SK-N-SH (cell line): ENCODE measurements at regions of chr17 and their contacts with region 1.

Region 1: GRCh38 chr17:77542551-77543490 is 402.1 kb downstream of the SEC14L1 start:
- DNase-seq: peak; percentile 94
- H3K4me3 ChIP-seq: peak overlapping the region in 1 of 2 experiments; percentile 8; a peak in 1 of 4 replicates
- H3K27ac ChIP-seq: 0 out of 4 replicates have a peak overlapping the region, but pooled peaks of 1 of the 2 experiments have one; percentile 18
- H3K4me1 ChIP-seq: peaks cover 4 to 23% of the 10 kb centered on the region in 2 experiments; a peak in 2 of 4 replicates
- H3K27me3 ChIP-seq: peaks cover 52% of the 10 kb centered on the region
- CTCF ChIP-seq: peak; percentile 99
- EP300 ChIP-seq: peak in 1 of 2 experiments; percentile 69; a peak in 1 of 4 replicates
- RAD21 ChIP-seq: peak; percentile 100

Region 2: DNA sequence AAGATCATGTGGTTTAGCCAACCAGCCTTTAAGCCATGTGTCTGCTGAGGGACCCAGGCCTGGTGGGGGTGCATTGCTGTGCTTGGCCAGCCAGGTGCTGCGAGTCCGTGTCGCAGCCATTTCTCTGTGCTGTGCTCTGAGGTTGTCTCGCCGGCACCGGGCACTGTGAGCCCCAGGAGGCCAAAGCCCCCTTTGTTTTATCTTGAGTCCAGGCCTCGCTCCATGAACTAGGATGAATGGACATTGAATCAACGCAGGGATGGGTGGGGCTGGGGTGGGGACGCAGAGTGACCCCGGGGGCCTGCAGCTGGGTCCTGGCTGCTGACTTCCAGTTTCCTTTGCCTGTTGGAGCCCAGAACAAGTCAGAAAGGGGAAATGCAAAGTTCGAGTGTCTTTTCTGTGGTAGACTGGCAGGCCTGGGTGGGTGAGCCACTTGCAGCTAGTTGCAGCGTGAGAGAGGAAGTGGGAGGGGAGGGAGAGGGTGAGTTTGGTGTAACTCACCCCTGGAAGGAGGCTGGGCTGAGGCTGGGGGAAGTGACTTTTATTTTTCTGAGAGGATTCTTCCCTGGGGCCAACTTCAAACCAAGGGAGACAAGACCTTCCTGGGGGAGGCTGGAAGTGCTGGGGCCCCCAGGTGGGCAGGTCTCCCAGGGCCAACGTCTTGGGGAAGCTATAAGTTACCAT is 77.3 kb before region 1 on chr17:
- CTCF ChIA-PET with region 1: no interaction called
- POLR2A ChIA-PET with region 1: no interaction called
- DNase-seq: no peak
- H3K4me3 ChIP-seq: no peak overlapping the region
- H3K27ac ChIP-seq: peak overlapping the region in 1 of 2 experiments; percentile 38; a peak in 2 of 4 replicates
- H3K4me1 ChIP-seq: peaks cover 20 to 23% of the 10 kb centered on the region in 2 experiments; a peak in 3 of 4 replicates
- H3K27me3 ChIP-seq: no peaks in the 10 kb centered on the region
- CTCF ChIP-seq: no peak
- EP300 ChIP-seq: no peak
- RAD21 ChIP-seq: no peak

Region 3: GRCh38 chr17:77482375-77483127 is 60.3 kb before region 1 on chr17:
- CTCF ChIA-PET with region 1: no interaction called
- POLR2A ChIA-PET with region 1: no interaction called
- DNase-seq: no peak
- H3K4me3 ChIP-seq: no peak overlapping the region
- H3K27ac ChIP-seq: no peak overlapping the region
- H3K4me1 ChIP-seq: peaks cover 11 to 37% of the 10 kb centered on the region in 2 experiments
- H3K27me3 ChIP-seq: no peaks in the 10 kb centered on the region
- CTCF ChIP-seq: no peak
- EP300 ChIP-seq: no peak
- RAD21 ChIP-seq: no peak

Region 4: DNA sequence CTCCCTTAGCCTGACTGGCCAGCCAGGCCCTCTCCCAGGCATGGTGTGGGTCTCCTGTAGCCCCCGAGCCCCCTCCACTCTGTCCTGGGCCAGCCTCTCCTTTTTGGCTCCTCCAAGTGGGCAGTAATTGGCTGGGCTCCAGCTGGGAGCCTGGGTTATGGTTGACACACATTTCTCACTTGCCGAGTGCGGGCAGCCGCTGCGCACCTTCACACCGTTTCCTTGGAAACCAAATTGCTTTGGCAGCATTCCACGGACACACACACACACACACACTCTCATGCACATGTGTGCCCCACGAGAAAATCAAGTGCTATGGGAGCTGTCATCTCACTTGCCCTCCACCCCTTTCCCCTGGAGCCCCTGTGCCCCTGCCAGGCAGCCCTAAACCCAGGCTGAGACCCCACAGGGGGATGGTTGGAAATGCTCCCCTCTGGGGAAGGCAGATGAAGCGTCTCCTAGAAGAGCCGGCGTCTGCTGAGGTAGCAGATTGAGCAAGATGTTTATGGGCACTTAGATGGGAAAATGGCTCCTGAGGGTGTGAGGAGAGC is 13.0 kb after region 1 on chr17:
- CTCF ChIA-PET with region 1: interaction called, 60 read pairs
- POLR2A ChIA-PET with region 1: interaction called, 4 read pairs
- DNase-seq: peak; percentile 92
- H3K4me3 ChIP-seq: no peak overlapping the region
- H3K27ac ChIP-seq: no peak overlapping the region
- H3K4me1 ChIP-seq: peaks cover 0 to 18% of the 10 kb centered on the region in 2 experiments; a peak in 1 of 4 replicates
- H3K27me3 ChIP-seq: peaks cover 50% of the 10 kb centered on the region
- CTCF ChIP-seq: no peak
- EP300 ChIP-seq: peak in 1 of 2 experiments; percentile 40; a peak in 1 of 4 replicates
- RAD21 ChIP-seq: peak; percentile 15

Region 5: DNA sequence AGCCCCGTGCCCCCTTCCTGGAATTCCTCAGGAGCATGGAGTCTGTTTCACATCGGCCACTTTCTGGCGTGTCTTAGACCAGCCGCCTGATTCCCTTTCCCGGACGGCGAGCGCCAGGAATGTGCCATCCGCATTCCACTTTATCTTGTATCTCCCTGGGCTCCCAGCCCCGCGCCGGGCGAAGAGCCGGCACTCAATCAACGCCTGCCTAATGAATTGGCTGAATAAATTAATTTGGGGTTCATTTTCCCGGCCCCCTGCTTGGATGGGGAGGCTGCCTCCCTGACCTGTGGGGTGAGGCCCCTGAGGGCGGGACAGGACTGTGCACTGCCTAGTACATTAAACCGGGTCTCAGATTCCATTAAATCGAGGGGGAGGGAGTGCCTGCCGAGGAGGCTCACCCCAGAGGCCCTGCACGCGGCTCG is 133.4 kb after region 1 on chr17:
- CTCF ChIA-PET with region 1: no interaction called
- POLR2A ChIA-PET with region 1: no interaction called
- DNase-seq: no peak
- H3K4me3 ChIP-seq: no peak overlapping the region
- H3K27ac ChIP-seq: no peak overlapping the region
- H3K4me1 ChIP-seq: peaks cover 0 to 6% of the 10 kb centered on the region in 2 experiments; a peak in 1 of 4 replicates
- H3K27me3 ChIP-seq: peaks cover 49% of the 10 kb centered on the region
- CTCF ChIP-seq: no peak
- EP300 ChIP-seq: no peak
- RAD21 ChIP-seq: no peak

Region 6: GRCh38 chr17:77690271-77691161 is 147.7 kb after region 1 on chr17:
- CTCF ChIA-PET with region 1: interaction called, 24 read pairs
- POLR2A ChIA-PET with region 1: interaction called, 3 read pairs
- DNase-seq: peak; percentile 88
- H3K4me3 ChIP-seq: peak overlapping the region in 1 of 2 experiments; percentile 12; a peak in 1 of 4 replicates
- H3K27ac ChIP-seq: peak overlapping the region in 1 of 2 experiments; percentile 93; a peak in 2 of 4 replicates
- H3K4me1 ChIP-seq: peaks cover 0 to 33% of the 10 kb centered on the region in 2 experiments; a peak in 1 of 4 replicates
- H3K27me3 ChIP-seq: peaks cover 48% of the 10 kb centered on the region; the same call in 1 of the 2 replicates
- CTCF ChIP-seq: no peak
- EP300 ChIP-seq: peak in 1 of 2 experiments; percentile 75; a peak in 2 of 4 replicates
- RAD21 ChIP-seq: peak; percentile 8; the same call in 1 of the 2 replicates

Region 7: DNA sequence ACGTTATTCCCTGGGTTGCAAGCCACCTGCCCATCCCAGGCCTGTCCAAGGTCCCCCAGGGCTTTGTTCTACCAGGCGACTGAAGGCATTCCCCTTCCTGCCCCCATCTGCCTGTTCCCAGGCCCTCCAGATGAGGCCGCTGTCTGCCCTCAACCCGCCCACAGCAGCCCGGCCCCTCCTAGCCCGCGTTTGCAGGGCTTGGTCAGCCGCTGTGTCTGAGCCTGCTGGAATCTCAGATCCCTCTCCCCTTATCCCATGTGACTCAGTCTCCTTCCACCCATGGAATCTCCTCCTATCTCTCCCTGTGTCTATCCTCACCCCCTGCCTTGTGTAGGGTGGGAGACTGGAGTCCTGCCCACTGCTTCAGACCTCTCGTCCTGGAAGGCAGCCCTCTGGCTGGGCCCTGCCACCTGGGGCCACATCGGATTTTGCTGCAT is 229.7 kb after region 1 on chr17:
- CTCF ChIA-PET with region 1: interaction called, 13 read pairs
- POLR2A ChIA-PET with region 1: no interaction called
- DNase-seq: peak; percentile 85
- H3K4me3 ChIP-seq: no peak overlapping the region
- H3K27ac ChIP-seq: peak overlapping the region in 1 of 2 experiments; percentile 13; a peak in 1 of 4 replicates
- H3K4me1 ChIP-seq: peaks cover 0 to 27% of the 10 kb centered on the region in 2 experiments; a peak in 1 of 4 replicates
- H3K27me3 ChIP-seq: no peaks in the 10 kb centered on the region
- CTCF ChIP-seq: peak; percentile 50
- EP300 ChIP-seq: no peak
- RAD21 ChIP-seq: peak; percentile 69

Region 8: GRCh38 chr17:77815127-77815905 is 272.5 kb after region 1 on chr17:
- CTCF ChIA-PET with region 1: interaction called, 45 read pairs
- POLR2A ChIA-PET with region 1: no interaction called
- DNase-seq: peak; percentile 63
- H3K4me3 ChIP-seq: no peak overlapping the region
- H3K27ac ChIP-seq: no peak overlapping the region
- H3K4me1 ChIP-seq: peaks cover 5 to 14% of the 10 kb centered on the region in 2 experiments; a peak in 2 of 4 replicates
- H3K27me3 ChIP-seq: no peaks in the 10 kb centered on the region
- CTCF ChIP-seq: no peak
- EP300 ChIP-seq: no peak
- RAD21 ChIP-seq: peak; percentile 76

Region 9: DNA sequence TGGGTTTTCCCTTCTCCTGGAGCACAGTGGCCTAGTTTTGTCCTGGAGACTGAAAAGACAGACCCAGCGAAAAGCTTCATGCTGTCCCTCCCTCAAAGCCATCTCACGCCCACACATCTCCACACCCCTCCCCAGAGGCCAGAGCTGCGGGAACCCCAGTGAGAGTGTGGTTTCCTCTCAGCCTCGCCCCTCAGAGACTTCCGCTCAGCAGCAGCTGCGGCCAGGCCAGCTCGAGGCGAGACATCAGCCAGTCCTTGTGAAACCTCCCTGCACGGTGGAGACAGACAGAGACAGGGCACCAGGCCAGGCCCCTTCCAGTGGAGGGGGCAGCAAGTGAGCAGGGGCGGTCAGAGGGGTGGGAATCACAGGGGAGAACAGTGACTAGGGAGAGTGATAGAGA is 338.7 kb after region 1 on chr17:
- CTCF ChIA-PET with region 1: interaction called, 29 read pairs
- POLR2A ChIA-PET with region 1: no interaction called
- DNase-seq: peak; percentile 86
- H3K4me3 ChIP-seq: no peak overlapping the region
- H3K27ac ChIP-seq: peak overlapping the region; percentile 31 to 100; a peak in 3 of 4 replicates
- H3K4me1 ChIP-seq: peaks cover 14 to 67% of the 10 kb centered on the region in 2 experiments
- H3K27me3 ChIP-seq: 0 out of 2 replicates have a peak, but pooled peaks cover 6% of the 10 kb centered on the region
- CTCF ChIP-seq: no peak
- EP300 ChIP-seq: peak in 1 of 2 experiments; percentile 75; a peak in 2 of 4 replicates
- RAD21 ChIP-seq: peak; percentile 50

Region 10: GRCh38 chr17:78013683-78014467 is 471.1 kb after region 1 on chr17:
- CTCF ChIA-PET with region 1: interaction called, 246 read pairs
- POLR2A ChIA-PET with region 1: interaction called, 11 read pairs
- DNase-seq: peak; percentile 71
- H3K4me3 ChIP-seq: no peak overlapping the region
- H3K27ac ChIP-seq: peak overlapping the region in 1 of 2 experiments; percentile 50; a peak in 2 of 4 replicates
- H3K4me1 ChIP-seq: peaks cover 0 to 8% of the 10 kb centered on the region in 2 experiments; a peak in 1 of 4 replicates
- H3K27me3 ChIP-seq: no peaks in the 10 kb centered on the region
- CTCF ChIP-seq: peak; percentile 99
- EP300 ChIP-seq: no peak
- RAD21 ChIP-seq: peak; percentile 97